K562 (cell line): ENCODE measurements at regions of chr12 and their contacts with region 1.

Region 1: GRCh38 chr12:98939350-98939749 is 294.3 kb downstream of the APAF1 start:
- DNase-seq: peak in 1 of 4 experiments; percentile 14
- ATAC-seq: peak; percentile 65
- H3K4me3 ChIP-seq: no peak overlapping the region
- H3K27ac ChIP-seq: no peak overlapping the region
- H3K4me1 ChIP-seq: no peaks in the 10 kb centered on the region
- H3K27me3 ChIP-seq: no peaks in the 10 kb centered on the region; a peak in 1 of 5 replicates
- CTCF ChIP-seq: peak in 2 of 3 experiments; percentile 44 to 54; a peak in 2 of 6 replicates
- EP300 ChIP-seq: no peak
- POLR2A ChIP-seq: no peak
- RAD21 ChIP-seq: peak in 1 of 2 experiments; percentile 54; a peak in 3 of 4 replicates

Region 2: GRCh38 chr12:98572010-98572409 is 367.3 kb before region 1 on chr12:
- CTCF ChIA-PET with region 1: no interaction called
- POLR2A ChIA-PET with region 1: no interaction called
- in situ Hi-C with region 1: no loop called
- intact Hi-C with region 1: loop called (anchors 5 kb)
- DNase-seq: peak in 3 of 4 experiments; percentile 40 to 54 (median 49)
- ATAC-seq: peak; percentile 89
- H3K4me3 ChIP-seq: no peak overlapping the region
- H3K27ac ChIP-seq: no peak overlapping the region
- H3K4me1 ChIP-seq: no peaks in the 10 kb centered on the region
- H3K27me3 ChIP-seq: no peaks in the 10 kb centered on the region
- CTCF ChIP-seq: peak; percentile 59 to 65 (median 60)
- EP300 ChIP-seq: no peak
- POLR2A ChIP-seq: no peak
- RAD21 ChIP-seq: peak in 1 of 2 experiments; percentile 37; a peak in 2 of 4 replicates

Region 3: GRCh38 chr12:98725476-98726247 is 213.7 kb before region 1 on chr12:
- CTCF ChIA-PET with region 1: no interaction called
- POLR2A ChIA-PET with region 1: no interaction called
- in situ Hi-C with region 1: no loop called
- intact Hi-C with region 1: loop called (anchors 2 kb)
- DNase-seq: peak in 3 of 4 experiments; percentile 20 to 54 (median 48)
- ATAC-seq: peak; percentile 94
- H3K4me3 ChIP-seq: no peak overlapping the region
- H3K27ac ChIP-seq: no peak overlapping the region
- H3K4me1 ChIP-seq: 0 out of 5 replicates have a peak, but pooled peaks cover 0 to 3% of the 10 kb centered on the region in 2 experiments
- H3K27me3 ChIP-seq: no peaks in the 10 kb centered on the region
- CTCF ChIP-seq: peak; percentile 46 to 61 (median 52); a peak in 5 of 6 replicates
- EP300 ChIP-seq: no peak
- POLR2A ChIP-seq: no peak
- RAD21 ChIP-seq: peak; percentile 43 to 67